Heart right ventricle (tissue), 16 donors: ENCODE measurements at regions of chr15 and their contacts with region 1.

Region 1: GRCh38 chr15:90362936-90363212 is 10.8 kb downstream of the ZNF774 start:
- DNase-seq: no peak
- ATAC-seq: peak in 6 of 8 donors; percentile 58 to 75 (median 66)
- H3K4me3 ChIP-seq: no peak overlapping the region
- H3K27ac ChIP-seq: peak overlapping the region in 9 of 10 donors; percentile 42 to 89 (median 77)
- H3K4me1 ChIP-seq: peaks cover 2 to 40% (median 20%) of the 10 kb centered on the region in 9 donors
- H3K27me3 ChIP-seq: no peaks in the 10 kb centered on the region
- CTCF ChIP-seq: no peak

Region 2: DNA sequence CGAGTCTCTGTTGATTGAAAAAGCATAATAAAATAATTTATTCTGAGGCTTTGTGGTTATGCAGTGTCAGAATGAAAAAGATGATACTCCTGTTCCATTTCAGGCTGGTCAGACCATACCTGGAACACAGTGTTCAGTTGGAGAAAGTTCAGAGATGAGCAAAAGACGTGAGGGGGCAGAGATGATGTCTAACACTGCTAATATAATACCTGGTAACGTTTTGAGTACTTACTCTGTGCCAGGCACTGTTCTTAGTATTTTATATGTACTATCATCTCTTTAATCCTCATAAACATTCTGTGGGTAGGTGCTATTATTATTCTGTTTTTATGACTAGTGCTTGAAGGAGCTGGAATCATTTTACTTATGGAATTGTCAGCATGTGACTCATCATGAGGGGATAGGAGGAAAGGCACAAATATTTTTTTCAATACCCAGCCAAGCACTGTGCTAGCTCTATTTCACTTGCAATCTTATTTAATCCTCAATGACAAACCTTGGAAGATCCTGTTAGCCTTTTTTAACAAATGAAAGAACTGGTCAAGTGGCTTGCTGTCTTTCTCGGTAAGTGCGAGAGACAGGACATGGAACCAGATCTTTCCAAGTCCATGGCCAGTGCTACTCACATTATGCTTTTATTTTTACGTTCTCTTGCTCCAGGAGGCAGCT is 57.0 kb after region 1 on chr15:
- intact Hi-C with region 1: loop called in 1 of 10 experiments (anchors 2 kb)
- DNase-seq: no peak
- ATAC-seq: peak in 6 of 8 donors; percentile 32 to 70 (median 56)
- H3K4me3 ChIP-seq: no peak overlapping the region
- H3K27ac ChIP-seq: peak overlapping the region in 8 of 10 donors; percentile 5 to 60 (median 36)
- H3K4me1 ChIP-seq: peaks cover 8 to 83% (median 74%) of the 10 kb centered on the region in 9 donors
- H3K27me3 ChIP-seq: no peaks in the 10 kb centered on the region
- CTCF ChIP-seq: no peak

Region 3: DNA sequence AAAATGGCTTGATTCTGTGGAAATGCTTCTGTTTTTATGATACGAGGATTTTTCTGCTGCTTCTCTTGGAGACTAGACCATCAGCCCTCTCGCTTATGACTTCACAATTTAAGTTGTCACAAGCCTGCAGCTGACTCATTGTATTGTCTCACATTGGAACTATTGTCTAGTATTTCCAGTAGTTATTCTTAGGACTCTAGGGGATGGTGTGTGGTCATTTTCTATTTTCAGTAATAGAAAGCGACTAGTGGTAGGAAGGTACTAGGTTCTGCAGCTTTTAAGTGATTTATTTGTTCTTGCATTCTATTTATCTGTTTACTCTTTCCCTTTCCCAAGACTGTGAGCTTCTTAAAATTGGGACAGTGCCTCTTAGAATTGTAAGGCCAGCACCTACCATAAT is 100.5 kb after region 1 on chr15:
- intact Hi-C with region 1: loop called in 1 of 10 experiments (anchors 5 kb)
- DNase-seq: peak in 1 of 2 donors; percentile 65
- ATAC-seq: peak; percentile 83 to 95 (median 94)
- H3K4me3 ChIP-seq: no peak overlapping the region
- H3K27ac ChIP-seq: peak overlapping the region; percentile 67 to 93 (median 87)
- H3K4me1 ChIP-seq: peaks cover 14 to 81% (median 56%) of the 10 kb centered on the region in 9 donors
- H3K27me3 ChIP-seq: no peaks in the 10 kb centered on the region
- CTCF ChIP-seq: peak in 5 of 9 donors; percentile 10 to 38 (median 31)

Region 4: DNA sequence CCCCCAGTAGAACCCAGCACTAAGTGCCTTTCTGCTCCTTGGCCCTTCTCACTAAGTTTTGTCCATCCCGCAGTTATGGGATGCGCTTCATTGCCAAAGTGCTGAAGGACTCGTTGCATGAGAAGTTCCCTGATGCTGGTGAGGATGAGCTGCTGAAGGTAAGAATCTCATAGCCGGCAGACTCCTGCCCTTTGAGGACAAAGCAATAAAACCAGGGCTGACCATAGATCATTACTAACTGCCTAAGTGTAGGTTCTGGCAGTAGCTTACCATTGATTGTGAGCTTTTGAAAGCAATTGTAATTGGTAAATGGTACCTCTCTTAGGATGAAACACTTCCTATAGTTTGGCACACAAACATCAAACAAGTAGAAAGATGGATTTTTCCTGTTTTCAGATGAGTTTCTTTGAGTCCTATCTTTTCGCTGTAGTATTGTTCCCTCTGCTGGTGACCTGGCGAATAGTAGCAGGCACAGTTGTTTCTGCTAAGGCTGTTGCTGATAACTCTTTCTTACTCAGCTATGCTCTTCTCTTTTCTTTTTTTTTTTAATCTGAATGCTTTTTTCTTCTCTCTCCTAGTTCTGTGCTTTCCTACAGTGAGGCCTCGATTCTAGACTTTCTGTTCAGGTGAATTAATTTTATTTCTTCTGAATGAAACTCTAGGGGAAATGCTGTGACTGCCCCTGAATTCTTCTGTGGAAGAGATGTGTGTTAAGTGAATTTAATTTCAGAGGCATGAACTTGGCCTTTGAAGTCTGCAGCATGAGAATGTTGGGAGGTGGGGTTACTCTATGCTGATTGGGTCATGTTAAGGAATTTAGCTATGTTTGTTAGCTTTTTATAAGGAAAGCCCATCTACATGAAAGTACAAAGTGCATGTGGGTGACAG is 119.5 kb after region 1 on chr15:
- intact Hi-C with region 1: loop called (anchors 1 to 10 kb)
- DNase-seq: peak in 1 of 2 donors; percentile 50
- ATAC-seq: peak in 7 of 8 donors; percentile 48 to 75 (median 60)
- H3K4me3 ChIP-seq: no peak overlapping the region
- H3K27ac ChIP-seq: no peak overlapping the region
- H3K4me1 ChIP-seq: no peaks in the 10 kb centered on the region
- H3K27me3 ChIP-seq: no peaks in the 10 kb centered on the region
- CTCF ChIP-seq: peak; percentile 50 to 88 (median 73)

Region 5: GRCh38 chr15:90603893-90604292 is 241.0 kb after region 1 on chr15:
- intact Hi-C with region 1: loop called in 1 of 10 experiments (anchors 10 kb)
- DNase-seq: peak in 1 of 2 donors; percentile 49
- ATAC-seq: peak in 1 of 8 donors; percentile 42
- H3K4me3 ChIP-seq: no peak overlapping the region
- H3K27ac ChIP-seq: no peak overlapping the region
- H3K4me1 ChIP-seq: peaks cover 0 to 12% (median 2%) of the 10 kb centered on the region in 9 donors
- H3K27me3 ChIP-seq: no peaks in the 10 kb centered on the region
- CTCF ChIP-seq: peak in 8 of 9 donors; percentile 11 to 62 (median 51)